Common myeloid progenitor, CD34-positive (primary cell): ENCODE measurements at regions of chr11 and their contacts with region 1.

Region 1: DNA sequence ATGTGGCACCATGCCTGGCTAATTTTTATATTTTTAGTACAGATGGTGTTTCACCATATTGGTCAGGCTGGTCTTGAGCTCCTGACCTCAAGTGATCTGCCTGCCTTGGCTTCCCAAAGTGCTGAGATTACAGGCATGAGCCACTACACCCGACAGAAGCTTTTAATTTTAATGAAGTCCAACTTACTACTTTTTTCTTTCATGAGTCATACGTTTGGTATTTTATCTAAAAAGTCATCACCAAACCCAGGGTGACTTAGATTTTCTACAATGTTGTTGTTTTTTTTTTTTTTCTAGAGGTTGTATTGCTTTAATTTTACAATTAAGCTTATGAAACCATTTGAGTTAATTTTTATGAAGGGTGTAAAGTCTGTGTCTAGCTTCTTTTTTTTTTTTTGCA is 34.9 kb downstream of the JRKL start:
- DNase-seq: no peak
- H3K4me3 ChIP-seq: no peak overlapping the region
- H3K27ac ChIP-seq: no peak overlapping the region
- H3K4me1 ChIP-seq: peaks cover 0 to 2% (median 1%) of the 10 kb centered on the region in 4 experiments
- H3K27me3 ChIP-seq: no peaks in the 10 kb centered on the region

Region 2: GRCh38 chr11:95835768-95836488 is 588.8 kb before region 1 on chr11:
- CTCF ChIA-PET with region 1: interaction called, 20 read pairs
- POLR2A ChIA-PET with region 1: no interaction called
- DNase-seq: peak; percentile 60 to 77 (median 74)
- H3K4me3 ChIP-seq: no peak overlapping the region
- H3K27ac ChIP-seq: no peak overlapping the region
- H3K4me1 ChIP-seq: no peaks in the 10 kb centered on the region
- H3K27me3 ChIP-seq: no peaks in the 10 kb centered on the region

Region 3: GRCh38 chr11:95849087-95849825 is 575.4 kb before region 1 on chr11:
- CTCF ChIA-PET with region 1: interaction called, 10 read pairs
- POLR2A ChIA-PET with region 1: interaction called, 3 read pairs
- DNase-seq: peak; percentile 56 to 70 (median 67)
- H3K4me3 ChIP-seq: no peak overlapping the region
- H3K27ac ChIP-seq: no peak overlapping the region
- H3K4me1 ChIP-seq: no peaks in the 10 kb centered on the region
- H3K27me3 ChIP-seq: no peaks in the 10 kb centered on the region